Sigmoid colon (tissue), 7 donors: ENCODE measurements at regions of chr19 and their contacts with region 1.

Region 1: DNA sequence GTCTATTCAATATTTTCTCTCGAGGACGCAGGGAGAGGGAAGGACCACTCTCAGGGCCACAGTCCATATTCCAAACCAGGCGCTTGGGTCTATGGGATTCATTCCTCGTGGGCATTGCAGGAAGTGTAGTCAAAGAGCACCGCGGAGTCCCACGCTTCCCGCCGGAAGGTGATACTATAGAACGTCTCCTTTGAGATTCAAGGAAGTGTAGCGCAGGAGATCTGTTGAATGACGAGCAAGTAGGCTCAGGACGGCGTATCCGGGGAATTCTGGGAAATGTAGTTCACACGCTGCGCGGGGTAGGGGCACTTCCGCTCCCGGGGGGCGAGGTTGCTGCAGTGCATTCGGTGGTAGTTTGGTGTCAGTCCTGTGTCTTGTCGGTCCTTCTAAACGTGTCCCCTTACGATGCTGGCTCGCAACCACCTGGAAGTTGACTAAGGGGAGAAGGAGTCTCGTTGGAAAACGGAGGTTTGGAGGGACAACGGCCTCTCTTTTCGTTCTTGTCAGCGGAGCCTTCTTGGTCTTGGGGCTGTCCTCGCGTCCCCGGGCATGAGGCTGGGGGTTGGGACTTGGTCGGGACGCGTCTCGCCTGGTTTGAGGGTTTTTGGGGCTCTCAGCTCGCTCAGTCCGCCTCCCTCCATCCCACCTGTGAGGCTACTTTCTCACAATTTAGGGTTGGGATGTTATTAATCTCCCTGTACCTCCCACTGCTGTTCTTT is at the start of gene ZNF284:
- DNase-seq: peak; percentile 92
- H3K4me3 ChIP-seq: peak within 1 kb of the TSS; percentile 47 to 68 (median 62)
- H3K27ac ChIP-seq: peak within 1 kb of the TSS; percentile 60 to 68 (median 66)
- H3K4me1 ChIP-seq: peaks cover 0 to 14% (median 10%) of the 10 kb centered on the region in 4 donors
- H3K27me3 ChIP-seq: no peaks in the 10 kb centered on the region
- CTCF ChIP-seq: no peak
- EP300 ChIP-seq: no peak
- POLR2A ChIP-seq: no peak
- total RNA-seq, gene ZNF284: 1.8 to 3.6 (median 2.6) TPM

Region 2: GRCh38 chr19:43895727-43896126 is 176.3 kb before region 1 on chr19:
- intact Hi-C with region 1: no loop called
- DNase-seq: no peak
- H3K4me3 ChIP-seq: no peak overlapping the region
- H3K27ac ChIP-seq: no peak overlapping the region
- H3K4me1 ChIP-seq: peaks cover 0 to 3% (median under 1%) of the 10 kb centered on the region in 4 donors
- H3K27me3 ChIP-seq: no peaks in the 10 kb centered on the region
- CTCF ChIP-seq: no peak
- EP300 ChIP-seq: no peak
- POLR2A ChIP-seq: no peak

Region 3: GRCh38 chr19:44093931-44094765 is 22.2 kb after region 1 on chr19 and contains the start of gene ZNF224:
- intact Hi-C with region 1: loop called (anchors 2 kb)
- DNase-seq: peak; percentile 94
- H3K4me3 ChIP-seq: peak within 1 kb of the TSS; percentile 69 to 83 (median 76)
- H3K27ac ChIP-seq: peak within 1 kb of the TSS; percentile 80 to 81 (median 81)
- H3K4me1 ChIP-seq: peaks cover 0 to 13% (median 10%) of the 10 kb centered on the region in 4 donors
- H3K27me3 ChIP-seq: no peaks in the 10 kb centered on the region
- CTCF ChIP-seq: no peak
- EP300 ChIP-seq: no peak
- POLR2A ChIP-seq: no peak
- total RNA-seq, gene ZNF224: 16.6 to 23.0 (median 19.6) TPM

Region 4: DNA sequence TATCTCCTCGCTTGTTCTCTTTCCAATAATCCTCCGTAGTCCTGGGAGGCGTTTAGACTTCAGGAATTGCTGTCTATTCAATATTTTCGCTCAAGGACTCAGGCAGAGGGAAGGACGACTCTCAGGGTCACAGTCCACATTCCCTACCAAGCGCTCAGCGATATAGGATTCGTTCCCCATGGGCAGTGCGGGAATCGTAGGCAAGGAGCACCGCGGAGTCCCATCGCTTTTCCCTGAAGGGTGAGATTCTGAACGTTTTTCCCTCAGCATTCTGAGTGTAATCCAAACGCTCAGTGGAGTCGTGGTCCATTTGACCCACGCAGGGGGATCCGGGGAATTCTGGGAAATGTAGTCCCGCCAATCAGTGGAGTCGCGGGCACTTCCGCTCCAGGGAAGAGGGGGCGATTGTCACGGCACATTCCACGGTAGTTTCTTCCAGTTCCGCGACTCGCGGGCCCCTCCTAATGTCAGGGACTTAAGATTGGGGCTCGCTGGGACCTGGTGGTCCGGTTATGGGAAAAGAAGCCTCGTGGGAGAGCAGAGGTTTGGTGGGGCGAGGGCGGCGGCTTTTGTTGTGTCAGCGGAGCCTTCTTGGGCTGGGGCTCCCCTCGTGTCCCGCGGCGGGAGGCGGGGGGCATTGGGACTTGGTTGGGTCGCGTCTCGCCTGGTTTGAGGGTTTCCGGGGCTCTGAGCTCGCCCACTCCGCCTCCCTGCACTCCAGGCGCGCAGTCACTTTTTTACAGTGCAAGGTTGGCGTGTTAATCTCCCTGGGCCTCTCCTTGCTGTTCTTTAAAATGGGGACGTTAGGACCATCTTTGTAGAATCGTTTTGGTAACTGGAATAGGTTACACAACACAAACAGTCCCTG is 69.4 kb after region 1 on chr19 and contains the start of gene ZNF234:
- intact Hi-C with region 1: no loop called
- DNase-seq: peak; percentile 86
- H3K4me3 ChIP-seq: peak within 1 kb of the TSS; percentile 76 to 92 (median 86)
- H3K27ac ChIP-seq: peak within 1 kb of the TSS; percentile 74 to 86 (median 82)
- H3K4me1 ChIP-seq: peaks cover 0 to 18% (median 14%) of the 10 kb centered on the region in 4 donors
- H3K27me3 ChIP-seq: no peaks in the 10 kb centered on the region
- CTCF ChIP-seq: no peak
- EP300 ChIP-seq: no peak
- POLR2A ChIP-seq: no peak
- total RNA-seq, gene ZNF234: 5.9 to 19.7 (median 7.9) TPM